ENCODE measurements at regions of chr9 and their contacts with region 1.

Region 1: DNA sequence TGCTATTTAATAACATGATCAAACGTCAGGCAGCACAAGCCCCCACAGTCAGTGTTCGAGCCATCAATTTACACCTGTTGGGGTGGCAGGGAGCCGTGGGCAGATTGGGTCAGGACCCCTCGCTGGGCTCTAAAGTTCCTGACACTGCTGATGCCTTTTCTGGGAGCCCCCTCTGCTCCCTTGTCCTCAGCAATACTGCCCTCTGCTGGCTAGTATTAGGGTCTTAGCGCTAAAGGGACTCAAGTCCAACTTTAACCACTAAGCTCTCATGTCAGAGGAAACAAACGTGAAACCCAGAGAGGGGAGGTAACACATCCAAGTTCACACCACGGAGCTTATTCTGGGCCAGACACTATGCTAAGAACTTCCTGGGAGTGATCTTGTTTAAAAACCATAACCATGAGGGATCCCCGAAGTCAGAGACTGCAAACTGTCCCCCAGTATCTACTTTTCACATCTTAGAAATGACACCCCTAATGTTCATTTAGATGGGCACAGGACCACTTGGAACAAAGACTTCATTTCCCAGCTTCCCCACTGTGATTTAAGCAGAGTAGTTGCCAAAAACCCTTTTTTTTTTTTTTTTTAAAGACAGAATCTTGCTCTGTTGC is 20.4 kb downstream of the ANKS6 start:
- DNase-seq: peak; percentile 58
- ATAC-seq: peak; percentile 66
- H3K4me3 Mint-ChIP-seq: no peak overlapping the region
- H3K27ac Mint-ChIP-seq: no peak overlapping the region
- H3K4me1 Mint-ChIP-seq: no peaks in the 10 kb centered on the region
- H3K27me3 Mint-ChIP-seq: no peaks in the 10 kb centered on the region
- CTCF ChIP-seq: peak; percentile 76

Region 2: DNA sequence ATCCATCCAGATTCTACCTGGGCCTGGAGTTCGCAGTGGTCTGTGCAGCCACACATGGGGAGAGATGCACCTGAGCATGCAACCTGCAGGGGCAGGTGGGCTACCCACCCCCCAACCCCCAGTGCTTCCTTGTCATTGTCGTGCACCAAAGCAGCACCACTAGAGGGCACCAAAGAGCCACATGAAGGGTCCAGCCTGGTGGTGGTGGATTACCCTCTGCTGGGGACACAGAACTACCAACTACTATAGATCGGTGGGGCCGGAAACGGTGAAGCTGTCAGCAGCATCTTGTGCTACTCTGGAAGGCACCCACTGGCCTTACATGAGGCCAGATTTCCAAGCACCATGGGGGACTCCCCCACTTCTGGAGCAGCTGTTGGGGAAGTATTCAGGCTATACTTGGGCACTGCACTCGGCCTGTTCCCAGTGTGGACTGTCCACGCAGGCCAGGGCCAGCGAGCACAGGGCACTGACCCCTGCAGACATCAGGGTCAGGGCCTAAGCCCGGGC is 460.3 kb before region 1 on chr9:
- CTCF ChIA-PET with region 1: interaction called, 41 read pairs
- POLR2A ChIA-PET with region 1: no interaction called
- intact Hi-C with region 1: loop called (anchors 5 kb)
- DNase-seq: peak; percentile 92
- ATAC-seq: peak; percentile 98
- H3K4me3 Mint-ChIP-seq: no peak overlapping the region
- H3K27ac Mint-ChIP-seq: no peak overlapping the region
- H3K4me1 Mint-ChIP-seq: no peaks in the 10 kb centered on the region
- H3K27me3 Mint-ChIP-seq: no peaks in the 10 kb centered on the region
- CTCF ChIP-seq: peak; percentile 78

Region 3: DNA sequence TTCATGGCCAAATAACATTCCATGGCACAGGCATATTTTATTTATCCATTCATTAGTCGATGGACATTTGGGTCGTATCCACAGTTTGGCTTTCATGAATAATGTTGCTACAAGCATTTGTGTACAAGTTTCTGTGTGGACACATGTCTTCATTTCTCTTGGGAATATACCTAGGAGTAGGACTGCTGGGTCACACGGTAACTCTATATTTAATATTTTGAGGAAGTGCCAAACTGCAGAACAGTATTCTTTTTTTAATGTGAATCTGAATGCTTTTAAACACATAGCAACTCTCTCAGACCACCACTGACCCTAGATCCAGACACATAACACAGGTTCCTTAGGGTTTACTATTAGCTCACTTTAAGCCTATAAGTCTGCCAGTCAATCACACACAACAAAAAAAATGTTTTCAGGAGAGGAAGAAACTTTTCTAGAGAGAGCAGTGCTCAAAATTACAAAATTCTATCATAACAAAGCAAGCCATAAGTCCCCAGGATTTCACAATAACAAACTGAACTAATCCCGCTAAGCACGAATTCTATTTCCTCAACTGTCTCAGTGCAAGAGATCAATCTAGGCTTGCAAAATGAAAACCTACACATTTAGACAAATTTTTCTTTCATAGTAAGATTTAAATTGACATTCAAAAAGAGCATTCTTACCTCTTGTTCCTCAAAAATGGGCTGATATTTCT is 25.4 kb before region 1 on chr9:
- CTCF ChIA-PET with region 1: interaction called, 10 read pairs
- POLR2A ChIA-PET with region 1: no interaction called
- intact Hi-C with region 1: no loop called
- DNase-seq: no peak
- ATAC-seq: no peak
- H3K4me3 Mint-ChIP-seq: no peak overlapping the region
- H3K27ac Mint-ChIP-seq: no peak overlapping the region
- H3K4me1 Mint-ChIP-seq: no peaks in the 10 kb centered on the region
- H3K27me3 Mint-ChIP-seq: no peaks in the 10 kb centered on the region
- CTCF ChIP-seq: no peak

Region 4: GRCh38 chr9:98760231-98760630 is 15.7 kb before region 1 on chr9:
- CTCF ChIA-PET with region 1: interaction called, 34 read pairs
- POLR2A ChIA-PET with region 1: no interaction called
- intact Hi-C with region 1: no loop called
- DNase-seq: no peak
- ATAC-seq: no peak
- H3K4me3 Mint-ChIP-seq: no peak overlapping the region
- H3K27ac Mint-ChIP-seq: no peak overlapping the region
- H3K4me1 Mint-ChIP-seq: no peaks in the 10 kb centered on the region
- H3K27me3 Mint-ChIP-seq: no peaks in the 10 kb centered on the region
- CTCF ChIP-seq: no peak

Region 5: DNA sequence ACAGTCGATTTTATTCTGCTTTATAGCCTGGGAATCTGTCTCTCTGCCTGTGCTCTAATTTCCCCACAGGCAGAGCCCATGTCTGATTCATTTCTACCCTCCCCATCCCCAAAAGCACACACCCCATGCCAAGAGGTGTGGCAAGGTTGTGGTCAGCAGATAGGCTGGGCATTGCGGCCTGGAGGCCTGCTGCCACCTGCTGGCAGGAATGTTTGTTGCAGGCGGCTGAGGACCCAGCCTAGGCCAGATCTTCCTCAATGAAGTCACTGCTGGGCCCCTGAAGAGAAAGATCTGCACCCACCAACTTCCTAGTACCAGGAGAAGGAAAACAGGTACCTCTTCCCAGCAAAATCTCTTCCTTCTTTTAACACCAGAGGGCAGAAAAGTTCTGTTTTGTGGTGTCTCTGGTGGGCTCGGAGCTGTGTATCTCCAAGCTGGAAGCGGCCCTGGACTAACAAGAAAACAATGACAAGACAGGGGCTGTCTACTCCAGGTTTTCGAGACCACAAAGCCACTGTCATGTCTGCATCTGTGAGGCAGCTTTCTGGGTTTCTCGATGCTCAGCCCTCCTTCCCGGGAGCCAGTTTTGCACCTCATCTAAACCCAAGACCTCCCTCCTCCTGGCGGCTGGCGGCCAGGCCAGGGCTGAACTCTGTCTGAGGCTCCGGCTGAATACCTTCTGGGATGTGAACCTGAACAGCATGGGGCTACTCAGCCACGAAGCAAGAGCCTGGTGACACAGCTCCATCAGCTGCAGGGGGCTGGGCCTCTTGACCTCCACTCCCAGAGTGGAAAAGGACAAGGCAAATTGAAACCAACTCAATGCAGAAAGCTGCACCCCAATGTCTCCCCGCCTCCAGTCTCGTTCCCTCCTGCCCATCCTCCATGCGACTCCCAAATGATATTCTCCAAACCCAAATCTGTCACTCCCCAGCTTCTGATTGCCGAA is 15.5 kb after region 1 on chr9:
- CTCF ChIA-PET with region 1: interaction called, 39 read pairs
- POLR2A ChIA-PET with region 1: no interaction called
- intact Hi-C with region 1: no loop called
- DNase-seq: peak; percentile 74
- ATAC-seq: peak; percentile 77
- H3K4me3 Mint-ChIP-seq: no peak overlapping the region
- H3K27ac Mint-ChIP-seq: no peak overlapping the region
- H3K4me1 Mint-ChIP-seq: peaks cover 28% of the 10 kb centered on the region
- H3K27me3 Mint-ChIP-seq: no peaks in the 10 kb centered on the region
- CTCF ChIP-seq: peak; percentile 98

Region 6: GRCh38 chr9:98807070-98807810 is 31.3 kb after region 1 on chr9 and contains the start of gene GALNT12:
- CTCF ChIA-PET with region 1: interaction called, 10 read pairs
- POLR2A ChIA-PET with region 1: interaction called, 3 read pairs
- intact Hi-C with region 1: no loop called
- DNase-seq: peak; percentile 63
- ATAC-seq: peak; percentile 83
- H3K4me3 Mint-ChIP-seq: peak within 1 kb of the TSS; percentile 82
- H3K27ac Mint-ChIP-seq: peak within 1 kb of the TSS; percentile 50
- H3K4me1 Mint-ChIP-seq: peaks cover 25% of the 10 kb centered on the region
- H3K27me3 Mint-ChIP-seq: peaks cover 2% of the 10 kb centered on the region
- CTCF ChIP-seq: no peak
- total RNA-seq, gene GALNT12: 12.8 to 14.3 TPM